ENCODE measurements at regions of chr2 and their contacts with region 1.

Region 1: GRCh38 chr2:181724662-181725061 is 44.3 kb upstream of the NEUROD1 start:
- DNase-seq: no peak
- H3K4me3 ChIP-seq: no peak overlapping the region
- H3K27ac ChIP-seq: no peak overlapping the region
- H3K4me1 ChIP-seq: no peaks in the 10 kb centered on the region
- H3K27me3 ChIP-seq: peaks cover 2% of the 10 kb centered on the region
- CTCF ChIP-seq: no peak

Region 2: DNA sequence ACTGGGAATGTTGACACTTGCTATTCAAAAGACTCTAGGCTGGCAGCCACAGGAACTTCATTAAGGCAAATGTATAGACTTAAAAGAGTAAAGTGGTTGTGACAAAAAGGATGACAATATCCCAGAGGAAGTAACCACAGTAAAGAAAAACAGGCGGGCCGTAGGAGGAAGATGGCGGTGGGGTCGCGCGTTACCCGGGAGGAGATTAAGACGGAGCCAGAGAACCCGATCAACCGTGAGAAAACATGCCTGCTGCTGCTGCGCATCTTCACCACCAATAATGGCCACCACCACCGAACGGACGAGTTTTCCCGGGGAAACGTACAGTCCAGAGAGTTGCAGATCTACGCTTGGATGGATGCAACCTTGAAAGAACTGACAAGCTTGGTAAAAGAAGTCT is 30.4 kb before region 1 on chr2:
- CTCF ChIA-PET with region 1: no interaction called
- dilution Hi-C with region 1: loop called (anchors 5 kb)
- in situ Hi-C with region 1: no loop called
- intact Hi-C with region 1: no loop called
- DNase-seq: no peak
- H3K4me3 ChIP-seq: no peak overlapping the region
- H3K27ac ChIP-seq: no peak overlapping the region
- H3K4me1 ChIP-seq: no peaks in the 10 kb centered on the region
- H3K27me3 ChIP-seq: peaks cover 2% of the 10 kb centered on the region
- CTCF ChIP-seq: no peak